PC-3 (cell line): ENCODE measurements at regions of chr1 and their contacts with region 1.

Region 1: DNA sequence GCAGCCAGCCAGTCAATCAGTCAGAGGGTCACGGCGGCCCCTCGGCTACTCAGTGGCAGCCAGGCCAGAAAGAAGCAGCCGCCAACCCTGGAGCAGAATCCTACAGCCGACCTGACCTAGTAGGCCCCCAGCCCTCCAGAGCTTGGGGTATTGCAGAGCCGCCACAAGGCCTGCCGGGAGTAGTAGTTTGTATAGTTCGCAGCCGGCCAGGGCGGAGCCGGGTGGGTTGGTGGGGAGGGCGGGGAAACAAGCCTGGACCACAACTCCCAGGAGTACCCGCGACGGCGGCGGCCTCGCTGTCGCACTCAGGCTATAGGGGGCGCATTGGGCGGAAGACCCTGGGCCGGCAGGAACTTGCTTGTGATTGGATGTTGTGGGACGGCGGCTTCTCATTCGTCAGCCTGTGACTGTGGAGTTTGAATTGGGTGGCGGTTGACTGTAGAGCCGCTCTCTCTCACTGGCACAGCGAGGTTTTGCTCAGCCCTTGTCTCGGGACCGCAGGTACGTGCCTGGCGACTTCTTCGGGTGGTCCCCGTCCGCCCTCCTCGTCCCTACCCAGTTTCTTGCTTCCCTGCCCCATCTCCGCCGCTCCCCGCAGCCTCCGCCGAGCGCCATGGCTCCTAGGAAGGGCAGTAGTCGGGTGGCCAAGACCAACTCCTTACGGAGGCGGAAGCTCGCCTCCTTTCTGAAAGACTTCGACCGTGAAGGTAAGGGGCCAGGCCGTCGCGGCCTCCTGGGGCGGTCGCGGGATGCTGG is at the start of gene CDCA8:
- DNase-seq: peak; percentile 97
- ATAC-seq: peak; percentile 86
- H3K4me3 ChIP-seq: peak within 1 kb of the TSS; percentile 94
- H3K27ac ChIP-seq: peak within 1 kb of the TSS; percentile 41
- H3K4me1 ChIP-seq: peaks cover 20% of the 10 kb centered on the region; the same call in 1 of the 2 replicates
- H3K27me3 ChIP-seq: no peaks in the 10 kb centered on the region
- CTCF ChIP-seq: peak; percentile 62
- total RNA-seq, gene CDCA8: 30.1 and 31.8 TPM in 2 replicates

Region 2: GRCh38 chr1:37553927-37554808 is 138.1 kb before region 1 on chr1 and contains the start of gene SNIP1:
- CTCF ChIA-PET with region 1: no interaction called
- POLR2A ChIA-PET with region 1: no interaction called
- intact Hi-C with region 1: loop called (anchors 5 kb)
- DNase-seq: peak; percentile 94
- ATAC-seq: peak; percentile 93
- H3K4me3 ChIP-seq: peak within 1 kb of the TSS; percentile 100
- H3K27ac ChIP-seq: peak within 1 kb of the TSS; percentile 59
- H3K4me1 ChIP-seq: peaks cover 20% of the 10 kb centered on the region
- H3K27me3 ChIP-seq: no peaks in the 10 kb centered on the region
- CTCF ChIP-seq: no peak
- total RNA-seq, gene SNIP1: 23.1 and 36.0 TPM in 2 replicates

Region 3: DNA sequence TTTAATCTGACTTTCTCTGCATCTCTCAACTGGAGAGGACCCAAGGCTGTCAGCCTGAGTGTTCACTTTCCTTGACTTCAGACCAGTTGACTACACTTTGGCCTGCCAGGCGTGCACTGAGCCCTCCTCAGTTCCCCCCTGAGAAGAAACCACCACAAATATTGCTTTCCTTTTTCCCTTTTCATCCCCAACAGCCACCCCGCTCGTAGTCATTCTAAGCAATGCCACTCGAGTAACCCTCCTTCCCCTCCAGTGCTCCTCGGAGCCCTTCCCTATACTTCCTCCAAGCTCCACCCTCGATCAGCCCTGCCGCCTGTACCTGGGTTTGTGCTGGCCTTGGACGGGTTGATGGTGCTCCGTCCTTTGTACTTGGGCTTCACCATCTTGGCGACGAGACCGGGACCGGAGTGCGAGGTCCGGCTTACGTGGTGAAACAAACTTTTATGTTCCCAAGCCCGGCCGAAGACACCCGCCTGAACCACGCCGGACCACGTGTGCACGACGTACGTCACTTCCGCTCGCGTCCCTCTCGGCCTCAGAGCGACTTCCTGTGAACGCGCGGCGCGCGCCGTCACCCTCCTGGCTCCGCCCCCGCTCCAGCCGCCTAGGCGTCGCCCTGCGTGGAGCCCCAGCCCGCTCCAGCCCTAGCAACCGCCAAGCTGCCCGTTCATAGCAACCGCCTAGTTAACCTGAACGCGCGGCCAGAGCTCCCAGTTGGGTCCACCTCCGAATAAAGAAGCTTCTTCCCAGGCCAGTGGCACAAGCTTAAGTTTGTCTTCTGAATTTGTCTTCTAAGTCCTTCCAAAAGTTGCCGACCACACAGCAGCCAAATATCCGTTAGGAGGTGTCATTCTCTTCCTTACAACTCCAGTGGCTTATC is 96.6 kb before region 1 on chr1 and contains the start of gene GNL2:
- CTCF ChIA-PET with region 1: interaction called, 4 read pairs
- POLR2A ChIA-PET with region 1: interaction called, 5 read pairs
- intact Hi-C with region 1: loop called (anchors 5 kb)
- DNase-seq: peak; percentile 97
- ATAC-seq: peak; percentile 98
- H3K4me3 ChIP-seq: peak within 1 kb of the TSS; percentile 96
- H3K27ac ChIP-seq: peak within 1 kb of the TSS; percentile 71
- H3K4me1 ChIP-seq: peaks cover 15% of the 10 kb centered on the region
- H3K27me3 ChIP-seq: no peaks in the 10 kb centered on the region
- CTCF ChIP-seq: no peak
- total RNA-seq, gene GNL2: 93.4 and 110 TPM in 2 replicates

Region 4: DNA sequence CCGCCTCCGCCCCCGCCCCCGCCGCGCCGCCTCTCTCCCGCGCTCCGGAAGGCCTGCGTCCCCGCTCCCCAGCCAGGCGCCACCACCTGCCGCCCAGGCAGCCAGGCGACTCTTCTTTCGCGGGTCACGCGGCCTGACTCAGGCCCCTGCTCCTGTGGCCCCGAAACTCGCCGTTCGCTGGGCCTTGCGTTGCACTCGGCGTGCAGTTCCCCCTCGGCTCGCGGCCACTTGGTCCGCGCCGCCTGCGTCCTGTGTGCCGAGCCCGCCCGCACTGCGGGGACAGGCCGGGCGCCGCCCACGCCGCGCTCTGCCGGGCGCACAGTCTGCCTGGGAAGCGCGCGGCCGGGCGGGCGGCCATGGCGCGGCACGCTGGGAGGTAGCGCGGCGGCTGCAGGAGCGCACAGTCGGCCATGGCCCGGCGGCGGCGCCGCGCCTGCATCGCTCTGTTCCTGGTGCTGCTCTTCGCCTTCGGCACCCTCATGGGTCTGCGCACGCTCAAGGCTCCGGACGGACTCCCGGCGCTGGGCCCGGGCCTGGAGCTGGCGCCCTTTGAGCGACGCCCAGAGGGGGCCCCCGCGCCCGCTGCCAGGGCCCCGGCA is 101.6 kb after region 1 on chr1 and contains the start of gene MANEAL:
- CTCF ChIA-PET with region 1: no interaction called
- POLR2A ChIA-PET with region 1: no interaction called
- intact Hi-C with region 1: loop called (anchors 5 kb)
- DNase-seq: peak; percentile 63
- ATAC-seq: peak; percentile 85
- H3K4me3 ChIP-seq: peak within 1 kb of the TSS; percentile 85
- H3K27ac ChIP-seq: no peak within 1 kb of the TSS
- H3K4me1 ChIP-seq: peaks cover 15% of the 10 kb centered on the region
- H3K27me3 ChIP-seq: no peaks in the 10 kb centered on the region
- CTCF ChIP-seq: no peak
- total RNA-seq, gene MANEAL: 47.6 and 54.1 TPM in 2 replicates

Region 5: GRCh38 chr1:37859507-37860345 is 167.5 kb after region 1 on chr1 and contains the start of gene MTF1:
- CTCF ChIA-PET with region 1: interaction called, 3 read pairs
- POLR2A ChIA-PET with region 1: no interaction called
- intact Hi-C with region 1: loop called (anchors 1 kb)
- DNase-seq: peak; percentile 97
- ATAC-seq: peak; percentile 93
- H3K4me3 ChIP-seq: peak within 1 kb of the TSS; percentile 92
- H3K27ac ChIP-seq: peak within 1 kb of the TSS; percentile 90
- H3K4me1 ChIP-seq: peaks cover 35% of the 10 kb centered on the region
- H3K27me3 ChIP-seq: no peaks in the 10 kb centered on the region
- CTCF ChIP-seq: peak; percentile 91
- total RNA-seq, gene MTF1: 5.4 and 10.7 TPM in 2 replicates

Region 6: GRCh38 chr1:38859561-38860453 is 1167.6 kb after region 1 on chr1 and contains the start of gene RRAGC:
- CTCF ChIA-PET with region 1: no interaction called
- POLR2A ChIA-PET with region 1: no interaction called
- intact Hi-C with region 1: no loop called
- DNase-seq: peak; percentile 97
- ATAC-seq: peak; percentile 94
- H3K4me3 ChIP-seq: peak within 1 kb of the TSS; percentile 95
- H3K27ac ChIP-seq: peak within 1 kb of the TSS; percentile 60
- H3K4me1 ChIP-seq: peaks cover 10% of the 10 kb centered on the region
- H3K27me3 ChIP-seq: no peaks in the 10 kb centered on the region
- CTCF ChIP-seq: no peak
- total RNA-seq, gene RRAGC: 7.0 and 10.0 TPM in 2 replicates